ENCODE measurements at regions of chr4 and their contacts with region 1.

Region 1: GRCh38 chr4:87103691-87104187 is 116.7 kb downstream of the KLHL8 start:
- DNase-seq: no peak
- H3K4me3 Mint-ChIP-seq: no peak overlapping the region
- H3K27ac Mint-ChIP-seq: no peak overlapping the region
- H3K4me1 Mint-ChIP-seq: peaks cover 24% of the 10 kb centered on the region
- H3K27me3 Mint-ChIP-seq: no peaks in the 10 kb centered on the region

Region 2: GRCh38 chr4:86250006-86250405 is 853.7 kb before region 1 on chr4:
- intact Hi-C with region 1: no loop called
- DNase-seq: no peak
- H3K4me3 Mint-ChIP-seq: no peak overlapping the region
- H3K27ac Mint-ChIP-seq: no peak overlapping the region
- H3K4me1 Mint-ChIP-seq: no peaks in the 10 kb centered on the region
- H3K27me3 Mint-ChIP-seq: no peaks in the 10 kb centered on the region

Region 3: DNA sequence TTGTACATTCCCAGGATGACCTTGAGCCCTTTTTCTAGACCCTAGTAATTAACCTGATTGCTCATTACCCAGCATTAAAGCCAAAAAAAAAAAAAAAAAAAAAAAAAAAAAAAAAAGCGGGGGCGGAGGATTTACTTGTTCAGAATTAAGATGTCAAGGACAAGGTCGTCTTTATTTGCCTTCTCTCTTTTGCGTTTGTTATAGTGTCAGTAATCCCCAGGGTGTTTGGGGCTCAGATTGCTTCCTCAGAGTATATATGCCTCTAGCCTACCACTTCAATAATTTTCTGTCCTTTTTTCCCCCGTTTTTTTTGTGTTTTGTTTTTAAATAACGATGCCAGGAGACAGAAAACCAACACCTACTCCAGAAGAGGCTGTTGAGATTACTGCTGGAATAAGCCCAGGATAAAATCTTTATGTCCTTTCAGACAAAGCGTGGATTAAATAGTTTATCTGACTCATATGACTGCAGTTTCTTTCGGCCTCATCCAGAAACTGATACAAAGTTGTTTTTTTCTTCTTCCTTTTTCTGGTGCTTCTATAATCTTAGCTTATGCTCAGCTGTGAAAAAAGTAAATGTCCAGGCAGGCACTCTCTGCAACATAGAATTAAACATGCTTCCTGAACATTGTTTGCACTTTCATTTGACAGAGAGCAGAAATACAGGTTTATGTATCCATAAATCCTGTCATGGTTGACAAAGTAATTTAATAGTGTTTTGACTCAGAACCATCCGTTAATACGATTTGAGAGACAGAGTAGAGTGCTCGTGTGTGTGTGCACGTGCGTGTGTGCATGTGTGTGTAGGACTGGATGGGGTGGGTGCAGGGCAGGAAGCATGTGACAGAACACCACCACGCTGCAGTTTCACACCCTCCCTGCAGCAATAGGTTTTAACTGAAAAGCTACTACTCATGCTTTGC is 30.3 kb before region 1 on chr4:
- intact Hi-C with region 1: loop called (anchors 2 kb)
- DNase-seq: peak; percentile 46
- H3K4me3 Mint-ChIP-seq: peak overlapping the region; percentile 74
- H3K27ac Mint-ChIP-seq: peak overlapping the region; percentile 88
- H3K4me1 Mint-ChIP-seq: peaks cover 48% of the 10 kb centered on the region
- H3K27me3 Mint-ChIP-seq: no peaks in the 10 kb centered on the region

Measured in activated T-helper 2 cell treated with anti-CD3 and anti-CD28 coated beads, Interferon-gamma antibody, Interleukin-2, Interleukin-4, amounts not matched to agents 10 μg/mL and 5 μg/mL and 100 μg/mL, durations not matched to agents 14 hours and 24 hours and 36 hours (primary cell).